Astrocyte of the cerebellum (primary cell): ENCODE measurements at regions of chr16 and their contacts with region 1.

Region 1: DNA sequence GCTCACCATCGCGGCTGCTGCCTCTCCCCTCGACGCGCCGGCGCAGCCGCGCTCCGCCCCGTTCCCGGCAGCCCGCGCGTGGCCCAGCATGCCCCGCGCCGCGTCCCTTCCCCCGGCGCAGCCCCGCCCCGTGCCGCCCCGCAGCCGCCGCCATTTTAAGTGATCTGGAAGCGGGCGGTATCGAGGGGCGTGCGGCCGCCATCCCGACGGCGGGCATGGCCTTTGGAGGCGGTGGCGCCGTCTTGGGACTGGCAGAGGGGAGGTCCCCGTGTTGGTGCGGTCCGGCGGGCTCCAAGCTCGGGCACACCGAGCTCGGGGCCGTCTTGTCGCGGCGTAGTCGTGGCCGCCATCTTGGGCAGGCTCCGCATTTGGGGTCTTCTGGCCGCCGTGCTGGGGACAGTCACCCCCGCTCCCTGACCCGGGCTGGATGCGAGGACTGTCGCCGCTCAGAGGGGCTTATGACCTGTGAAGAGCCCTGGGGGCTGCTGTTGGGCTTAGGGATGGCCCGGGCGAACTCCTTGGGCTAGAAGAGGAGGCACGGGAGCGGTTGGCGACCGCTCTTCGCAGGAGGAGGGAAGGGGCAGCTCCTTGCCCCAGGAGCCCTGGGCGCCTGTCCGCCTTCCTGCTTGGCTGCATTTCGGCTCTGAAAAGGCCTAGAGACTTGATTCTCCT is at the start of gene ELOB:
- DNase-seq: peak; percentile 37
- H3K4me3 ChIP-seq: peak within 1 kb of the TSS; percentile 88
- CTCF ChIP-seq: no peak

Region 2: DNA sequence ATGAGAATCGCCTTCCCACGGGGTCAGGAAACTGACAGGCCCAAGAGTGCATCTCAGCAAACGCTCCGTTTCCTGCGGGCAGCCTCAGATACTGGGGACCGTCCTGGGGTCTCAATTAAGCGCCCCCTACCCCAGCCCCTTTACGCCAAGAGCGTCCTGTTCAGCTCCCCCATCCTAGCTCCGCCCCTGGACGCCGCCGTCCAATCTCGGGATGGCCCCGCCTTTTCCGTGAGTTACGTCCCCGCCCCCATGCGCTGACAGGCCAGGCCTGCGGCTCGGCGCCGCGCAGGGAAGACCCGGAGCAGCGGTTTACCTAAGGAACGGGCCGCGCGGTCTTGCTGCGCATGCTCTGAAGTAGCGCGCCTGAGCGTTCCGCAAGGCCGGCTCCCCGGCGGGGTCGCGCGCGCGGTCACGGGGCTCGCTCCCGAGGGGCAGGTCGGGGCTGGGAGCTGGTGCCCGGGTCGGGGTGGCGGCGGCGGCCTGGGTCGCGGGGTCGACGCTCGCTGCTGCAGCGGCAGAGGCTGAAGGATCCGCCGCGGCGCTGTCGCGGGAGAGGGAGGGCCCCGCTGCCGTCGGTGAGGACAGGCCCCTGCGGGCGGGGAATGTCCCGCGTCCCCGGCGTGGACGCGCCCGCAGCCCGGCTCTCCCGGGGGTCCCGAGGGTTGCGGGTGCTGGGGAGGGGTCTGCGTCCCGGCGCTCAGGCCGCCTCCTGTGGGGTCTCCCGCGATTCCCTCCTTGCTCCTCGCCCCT is 134.4 kb after region 1 on chr16 and contains the start of gene FLYWCH1:
- in situ Hi-C with region 1: loop called (anchors 10 kb)
- DNase-seq: peak; percentile 94
- H3K4me3 ChIP-seq: peak within 1 kb of the TSS; percentile 89
- CTCF ChIP-seq: no peak

Region 3: DNA sequence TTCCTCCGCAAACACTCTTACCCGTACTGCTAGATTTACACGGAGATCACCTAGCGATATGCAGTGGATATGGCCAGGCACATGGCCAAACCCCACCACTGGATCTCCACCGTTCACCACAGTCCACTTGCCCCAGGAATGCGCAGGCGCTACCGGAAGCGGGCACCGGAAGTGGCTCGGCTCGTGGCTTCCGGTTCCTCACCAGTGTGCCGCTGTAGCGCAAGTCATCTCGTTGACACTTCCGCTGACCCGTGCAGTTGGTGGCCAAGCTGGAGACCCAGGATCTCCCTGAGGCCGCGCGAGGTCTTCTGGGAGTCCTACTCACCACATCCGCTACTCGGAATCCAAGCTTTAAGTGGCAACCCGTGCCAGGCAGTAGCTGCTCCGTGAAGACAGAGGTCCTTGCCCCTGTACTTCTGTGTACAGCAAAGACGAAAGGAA is 654.4 kb after region 1 on chr16:
- in situ Hi-C with region 1: no loop called
- DNase-seq: no peak
- H3K4me3 ChIP-seq: peak overlapping the region; percentile 4
- CTCF ChIP-seq: no peak